ENCODE measurements at regions of chr1 and their contacts with region 1.

Region 1: GRCh38 chr1:228131766-228132165 is 8.3 kb upstream of the GUK1 start:
- H3K4me3 ChIP-seq: no peak overlapping the region
- H3K27ac ChIP-seq: no peak overlapping the region
- H3K4me1 ChIP-seq: no peaks in the 10 kb centered on the region
- CTCF ChIP-seq: no peak

Region 2: GRCh38 chr1:227961651-227962225 is 170.0 kb before region 1 on chr1:
- CTCF ChIA-PET with region 1: no interaction called
- POLR2A ChIA-PET with region 1: no interaction called
- H3K4me3 ChIP-seq: no peak overlapping the region
- H3K27ac ChIP-seq: no peak overlapping the region
- H3K4me1 ChIP-seq: no peaks in the 10 kb centered on the region
- CTCF ChIP-seq: no peak

Region 3: DNA sequence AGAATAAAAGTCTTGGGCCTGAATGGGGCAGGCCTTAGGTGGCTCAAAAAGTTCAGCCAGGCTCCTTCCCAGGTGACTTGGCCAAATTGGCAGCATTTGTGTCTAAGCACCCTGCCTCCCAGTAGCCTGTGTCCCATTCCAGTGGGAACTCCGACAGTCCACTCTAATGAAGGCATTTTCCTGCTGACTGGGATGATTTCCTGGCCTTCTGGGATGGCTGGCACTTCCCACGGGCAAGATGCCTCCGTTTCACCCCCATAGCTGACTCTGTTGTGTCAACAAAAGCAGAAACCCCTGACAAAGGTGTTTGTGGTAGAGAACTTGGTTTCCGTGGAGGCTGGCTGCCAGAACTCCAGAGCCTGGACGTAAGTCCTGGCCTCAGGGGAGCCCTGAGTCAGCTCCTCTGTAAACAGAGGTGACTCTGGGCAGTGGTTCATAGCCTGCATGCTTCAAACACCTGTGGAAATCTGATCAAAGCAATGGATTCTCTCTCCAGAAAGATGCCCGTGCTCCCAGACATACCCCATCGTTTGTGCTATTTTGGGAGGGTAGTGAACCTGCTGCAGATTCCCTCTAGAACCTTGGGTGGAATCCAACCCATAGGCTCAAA is 88.4 kb before region 1 on chr1:
- CTCF ChIA-PET with region 1: no interaction called
- POLR2A ChIA-PET with region 1: no interaction called
- H3K4me3 ChIP-seq: no peak overlapping the region
- H3K27ac ChIP-seq: no peak overlapping the region
- H3K4me1 ChIP-seq: no peaks in the 10 kb centered on the region
- CTCF ChIP-seq: no peak

Region 4: DNA sequence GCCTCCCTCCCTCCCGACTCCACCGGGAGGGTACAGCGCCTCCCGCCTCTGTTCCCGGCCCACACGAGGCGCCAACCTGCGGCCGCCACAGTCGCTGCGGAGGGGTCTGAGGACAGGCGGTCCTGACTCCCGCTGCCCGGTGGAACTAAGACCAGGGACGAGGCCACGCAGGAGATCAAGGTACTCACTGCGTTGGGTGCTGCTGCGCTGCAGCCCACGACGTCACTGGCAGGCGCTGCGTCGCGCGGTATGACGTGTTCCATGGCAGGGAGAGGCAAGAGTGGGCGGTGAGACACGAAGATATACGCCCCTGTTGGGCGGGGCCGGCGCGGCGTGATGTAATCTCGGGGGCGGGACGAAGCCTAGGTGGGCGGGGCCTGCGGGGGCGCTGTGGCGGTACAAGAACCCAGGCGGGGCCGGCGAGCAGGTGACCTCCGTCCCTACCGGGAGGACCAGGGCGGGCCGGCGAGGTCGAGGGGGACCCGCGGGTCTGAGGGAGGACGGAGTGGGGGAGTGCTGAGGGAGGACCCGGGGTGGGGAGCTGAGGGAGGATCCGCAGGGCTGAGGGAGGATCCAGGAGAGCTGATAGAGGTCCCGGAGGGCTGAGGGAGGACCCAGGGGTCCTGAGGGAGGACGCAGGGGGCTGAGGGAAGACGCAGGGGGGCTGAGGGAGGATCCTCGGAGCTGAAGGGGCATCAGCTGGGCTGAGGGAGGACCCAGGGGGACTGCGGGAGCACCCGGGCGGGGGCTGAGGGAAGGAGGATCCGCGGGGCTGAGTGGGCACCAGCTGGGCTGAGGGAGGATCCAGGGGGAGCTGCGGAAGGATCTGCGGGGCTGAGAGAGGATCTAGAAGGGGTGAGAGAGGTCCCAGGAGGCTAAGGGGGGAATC is 22.4 kb before region 1 on chr1 and contains the start of gene MRPL55:
- CTCF ChIA-PET with region 1: interaction called, 57 read pairs
- POLR2A ChIA-PET with region 1: no interaction called
- H3K4me3 ChIP-seq: peak within 1 kb of the TSS; percentile 90
- H3K27ac ChIP-seq: peak within 1 kb of the TSS; percentile 69; the same call in 1 of the 2 replicates
- H3K4me1 ChIP-seq: 0 out of 2 replicates have a peak, but pooled peaks cover 3% of the 10 kb centered on the region
- CTCF ChIP-seq: peak; percentile 96

Region 5: DNA sequence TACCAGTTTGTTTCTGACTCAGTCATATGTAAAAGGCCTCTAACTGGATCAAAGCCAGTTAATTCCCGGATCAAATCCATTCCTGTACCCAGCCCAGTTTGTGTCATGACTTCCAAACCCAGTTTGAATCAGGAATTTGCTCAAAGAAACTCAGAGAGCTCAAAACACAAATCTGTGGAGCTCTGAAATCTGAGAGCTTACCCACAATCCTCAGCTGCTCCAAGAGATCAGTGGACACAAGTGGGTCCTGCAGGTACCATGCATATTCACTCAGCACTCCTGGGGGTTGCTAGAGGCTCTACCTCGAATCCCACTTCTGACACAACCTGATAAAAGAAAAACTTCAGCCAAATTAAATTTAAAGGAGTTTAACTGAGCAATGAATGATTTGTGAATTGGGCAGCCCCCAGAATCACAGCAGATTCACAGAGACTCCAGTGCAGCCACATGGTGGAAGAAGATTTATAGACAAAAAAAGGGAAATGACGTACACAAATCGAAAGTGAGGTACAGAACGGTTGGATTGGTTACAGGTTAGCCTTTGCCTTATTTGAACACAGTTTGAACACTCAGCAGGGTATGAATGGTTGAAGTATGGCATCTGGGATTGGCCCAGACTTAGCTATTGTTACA is 10.8 kb before region 1 on chr1:
- CTCF ChIA-PET with region 1: interaction called, 36 read pairs
- POLR2A ChIA-PET with region 1: no interaction called
- H3K4me3 ChIP-seq: no peak overlapping the region
- H3K27ac ChIP-seq: no peak overlapping the region
- H3K4me1 ChIP-seq: no peaks in the 10 kb centered on the region
- CTCF ChIP-seq: no peak

Region 6: GRCh38 chr1:228150461-228151179 is 18.9 kb after region 1 on chr1:
- CTCF ChIA-PET with region 1: interaction called, 10 read pairs
- POLR2A ChIA-PET with region 1: no interaction called
- H3K4me3 ChIP-seq: no peak overlapping the region
- H3K27ac ChIP-seq: no peak overlapping the region
- H3K4me1 ChIP-seq: peaks cover 3% of the 10 kb centered on the region; the same call in 1 of the 2 replicates
- CTCF ChIP-seq: no peak

Region 7: GRCh38 chr1:228515200-228515834 is 383.6 kb after region 1 on chr1:
- CTCF ChIA-PET with region 1: interaction called, 10 read pairs
- POLR2A ChIA-PET with region 1: no interaction called
- H3K4me3 ChIP-seq: no peak overlapping the region
- H3K27ac ChIP-seq: no peak overlapping the region
- H3K4me1 ChIP-seq: no peaks in the 10 kb centered on the region
- CTCF ChIP-seq: peak; percentile 89